Common myeloid progenitor, CD34-positive (primary cell): ENCODE measurements at regions of chr9 and their contacts with region 1.

Region 1: GRCh38 chr9:128203024-128203706 is at the start of gene DNM1:
- DNase-seq: peak; percentile 52 to 69 (median 67)
- H3K4me3 ChIP-seq: peak within 1 kb of the TSS; percentile 33 to 84 (median 72)
- H3K27ac ChIP-seq: no peak within 1 kb of the TSS
- H3K4me1 ChIP-seq: peaks cover 0 to 26% (median 14%) of the 10 kb centered on the region in 4 experiments
- H3K27me3 ChIP-seq: no peaks in the 10 kb centered on the region

Region 2: GRCh38 chr9:128191406-128192046 is 11.6 kb before region 1 on chr9 and contains the start of gene CIZ1:
- CTCF ChIA-PET with region 1: interaction called, 27 read pairs
- POLR2A ChIA-PET with region 1: no interaction called
- DNase-seq: peak; percentile 77 to 86 (median 84)
- H3K4me3 ChIP-seq: peak within 1 kb of the TSS; percentile 62 to 94 (median 79)
- H3K27ac ChIP-seq: peak within 1 kb of the TSS; percentile 61 to 84
- H3K4me1 ChIP-seq: peaks cover 0 to 37% (median 26%) of the 10 kb centered on the region in 4 experiments
- H3K27me3 ChIP-seq: no peaks in the 10 kb centered on the region

Region 3: DNA sequence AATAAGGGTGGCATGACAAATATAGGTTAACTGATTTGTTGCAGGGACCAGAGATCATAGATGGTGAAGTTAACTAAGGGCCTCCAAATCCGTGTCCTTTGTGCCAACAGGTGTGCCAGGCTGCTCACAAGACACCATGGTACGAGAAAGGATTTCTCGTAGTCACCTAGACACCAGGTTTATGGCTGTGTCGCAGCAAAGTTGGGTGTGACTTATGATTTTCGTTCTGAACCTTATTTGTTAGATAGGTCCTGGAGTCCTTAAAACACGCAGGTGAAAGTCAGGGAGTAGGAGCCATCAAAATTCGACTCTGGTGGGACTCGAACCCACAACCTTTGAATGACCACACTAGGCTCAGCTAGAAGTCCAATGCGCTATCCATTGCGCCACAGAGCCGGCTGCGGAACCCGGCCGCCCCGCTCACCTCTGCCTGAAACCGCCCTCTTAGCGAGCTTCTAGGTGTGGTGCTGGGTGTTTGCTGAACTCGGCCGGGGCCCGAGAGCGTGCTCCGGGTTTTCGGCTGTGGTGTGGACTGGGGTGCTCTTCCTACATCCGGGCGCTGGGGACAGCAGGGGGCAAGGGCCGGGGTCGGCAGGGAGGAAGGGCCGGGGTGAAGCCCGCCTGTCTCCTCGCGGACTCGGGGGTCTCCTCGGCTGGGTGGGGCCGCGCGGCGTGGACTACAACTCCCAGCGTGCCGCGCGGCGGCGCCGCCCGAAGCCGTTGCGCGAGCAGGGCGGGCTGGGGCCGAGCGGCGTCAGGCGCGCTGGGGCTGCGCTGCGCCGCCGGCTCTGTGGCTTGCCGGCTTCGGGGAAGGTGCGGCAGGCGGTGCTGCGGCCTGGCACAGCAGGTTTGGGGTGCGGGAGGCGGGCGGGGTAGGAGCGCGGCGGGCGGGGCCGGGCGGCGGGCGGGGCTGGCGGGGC is 136.9 kb after region 1 on chr9 and contains the start of gene SLC27A4:
- CTCF ChIA-PET with region 1: no interaction called
- POLR2A ChIA-PET with region 1: no interaction called
- DNase-seq: peak; percentile 72 to 87 (median 79)
- H3K4me3 ChIP-seq: peak within 1 kb of the TSS; percentile 55 to 86 (median 77)
- H3K27ac ChIP-seq: peak within 1 kb of the TSS in 1 of 2 experiments; percentile 49
- H3K4me1 ChIP-seq: peaks cover 3 to 12% (median 11%) of the 10 kb centered on the region in 4 experiments
- H3K27me3 ChIP-seq: no peaks in the 10 kb centered on the region